Activated naive CD4-positive, alpha-beta T cell treated with anti-CD3 and anti-CD28 coated beads for 36 hours (primary cell): ENCODE measurements at regions of chr3 and their contacts with region 1.

Region 1: DNA sequence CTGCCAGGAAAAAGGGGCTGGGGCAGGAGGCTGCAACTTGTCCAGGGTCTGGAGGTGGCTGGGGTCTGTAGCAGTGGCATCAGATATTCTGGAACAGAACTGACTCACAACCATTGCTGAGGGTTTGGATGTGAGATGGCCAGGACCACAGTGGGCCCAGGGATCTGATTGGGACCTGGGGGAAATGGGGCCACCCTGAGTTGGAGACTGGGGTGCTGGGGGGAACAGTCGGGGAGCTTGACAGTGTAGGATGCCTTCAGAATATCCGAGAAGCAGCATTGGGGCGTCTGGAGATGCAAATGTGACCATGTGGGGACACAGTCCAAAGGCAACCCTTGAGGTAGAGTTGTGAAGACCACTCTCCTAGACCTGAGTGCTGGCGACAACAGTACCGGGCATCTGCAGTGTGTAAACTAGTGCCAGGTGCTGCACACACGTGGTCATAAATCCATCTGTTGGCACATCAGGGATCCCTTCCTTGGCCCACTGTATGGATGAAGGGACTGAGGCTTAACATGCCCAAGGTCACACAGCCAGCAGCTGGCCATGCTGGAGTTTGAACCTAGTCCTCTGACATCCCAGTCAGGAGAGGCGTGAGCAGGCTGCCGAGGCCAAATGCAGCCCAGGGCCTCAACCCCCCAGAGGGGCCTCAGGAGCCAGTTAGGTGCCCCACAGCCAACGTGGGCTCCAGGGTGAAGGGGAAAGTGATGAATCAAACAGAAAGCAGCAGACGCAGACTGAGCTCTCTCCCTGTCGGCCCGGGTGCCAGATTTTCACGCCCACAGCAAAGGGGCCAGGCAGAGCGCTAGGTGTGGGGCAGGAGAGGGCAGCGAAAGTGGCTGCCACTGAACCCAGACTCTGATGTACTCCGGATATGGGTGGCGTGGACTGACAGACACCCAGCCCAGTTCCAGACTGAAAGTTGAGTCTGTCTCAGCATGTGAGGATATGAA is 18.8 kb downstream of the HEMK1 start:
- DNase-seq: peak; percentile 94
- H3K4me3 Mint-ChIP-seq: peak overlapping the region; percentile 42
- H3K27ac Mint-ChIP-seq: peak overlapping the region; percentile 99
- H3K4me1 Mint-ChIP-seq: peaks cover 91% of the 10 kb centered on the region
- H3K27me3 Mint-ChIP-seq: no peaks in the 10 kb centered on the region

Region 2: DNA sequence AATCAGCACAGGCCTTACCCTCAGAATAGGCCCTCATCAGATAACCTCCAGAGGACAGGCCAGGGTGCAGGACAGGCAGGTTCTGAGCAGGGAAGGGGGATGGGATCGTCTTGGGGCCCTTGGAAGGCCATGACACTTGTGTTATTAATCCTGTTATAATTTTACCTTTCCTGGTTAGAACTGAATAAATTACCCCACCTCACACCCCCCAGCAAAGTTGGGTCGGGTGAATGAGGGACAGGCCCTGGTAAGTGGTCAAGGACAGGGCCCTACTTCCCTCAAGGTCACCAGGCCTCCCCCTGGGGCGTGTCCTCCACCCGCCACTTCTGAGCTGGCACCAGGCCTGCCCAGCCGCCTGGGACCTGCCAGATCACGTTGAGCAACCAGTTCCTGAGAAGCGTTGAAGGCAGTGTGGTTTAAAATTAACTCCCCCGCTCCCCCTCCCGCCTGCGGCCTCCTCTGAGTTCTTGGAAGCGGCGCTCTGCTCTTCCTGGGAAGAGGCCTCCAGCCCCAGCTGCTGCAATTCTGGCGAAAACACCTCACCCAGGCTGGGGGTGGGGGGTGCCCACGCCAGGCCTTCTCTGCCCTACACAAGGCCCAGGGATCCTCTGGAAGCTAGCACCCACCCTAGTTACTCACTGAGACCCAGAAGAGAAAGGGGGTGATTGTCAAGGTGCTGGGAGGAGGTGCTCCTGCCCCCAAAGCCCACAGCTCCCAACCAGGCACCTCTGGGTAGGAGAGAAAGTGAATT is 12.9 kb after region 1 on chr3:
- CTCF ChIA-PET with region 1: interaction called, 94 read pairs
- intact Hi-C with region 1: loop called (anchors 1 kb)
- DNase-seq: peak; percentile 95
- H3K4me3 Mint-ChIP-seq: peak overlapping the region; percentile 68
- H3K27ac Mint-ChIP-seq: peak overlapping the region; percentile 100
- H3K4me1 Mint-ChIP-seq: peaks cover 74% of the 10 kb centered on the region
- H3K27me3 Mint-ChIP-seq: no peaks in the 10 kb centered on the region